Mammary epithelial cell (primary cell): ENCODE measurements at regions of chr15 and their contacts with region 1.

Region 1: GRCh38 chr15:99076552-99077308 is 28.1 kb upstream of the SYNM start:
- DNase-seq: peak; percentile 72
- H3K4me3 ChIP-seq: peak overlapping the region in 2 of 3 experiments; percentile 19 to 22
- H3K27ac ChIP-seq: no peak overlapping the region
- H3K4me1 ChIP-seq: no peaks in the 10 kb centered on the region
- H3K27me3 ChIP-seq: no peaks in the 10 kb centered on the region
- CTCF ChIP-seq: peak; percentile 90 to 95

Region 2: DNA sequence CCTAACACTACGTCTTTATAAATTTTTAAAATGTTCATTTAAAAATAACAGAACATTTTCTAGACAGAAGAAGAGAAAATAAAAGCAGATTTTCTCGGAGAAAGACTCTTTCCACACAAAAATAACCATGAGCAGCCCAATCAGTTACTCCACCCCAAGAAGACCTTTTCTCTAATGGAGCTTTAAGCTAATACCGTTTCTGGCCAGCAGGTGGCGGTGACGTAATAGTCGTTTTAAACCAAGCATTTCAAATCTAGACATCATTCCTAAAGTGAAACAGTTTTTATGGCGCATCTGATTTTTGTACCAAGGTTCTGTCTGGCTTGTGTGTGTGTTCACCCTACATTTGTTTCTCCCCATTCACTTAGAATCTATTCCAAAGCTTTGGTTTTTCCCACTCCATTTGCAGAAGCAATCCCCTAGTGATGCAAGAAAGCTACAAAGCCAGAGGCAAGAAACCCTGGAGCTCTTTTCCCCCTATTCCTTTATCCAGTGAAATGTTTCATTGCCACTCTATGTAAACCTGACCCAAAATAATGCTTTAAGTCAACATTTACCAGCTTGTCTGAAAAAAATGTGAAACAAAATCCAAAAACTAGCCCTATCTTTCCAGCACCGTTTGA is 765.1 kb before region 1 on chr15:
- CTCF ChIA-PET with region 1: no interaction called
- dilution Hi-C with region 1: no loop called
- in situ Hi-C with region 1: no loop called
- intact Hi-C with region 1: loop called (anchors 10 kb)
- DNase-seq: peak; percentile 62
- H3K4me3 ChIP-seq: no peak overlapping the region
- H3K27ac ChIP-seq: no peak overlapping the region
- H3K4me1 ChIP-seq: no peaks in the 10 kb centered on the region
- H3K27me3 ChIP-seq: no peaks in the 10 kb centered on the region
- CTCF ChIP-seq: peak; percentile 77 to 84

Region 3: GRCh38 chr15:98442379-98442833 is 634.3 kb before region 1 on chr15:
- CTCF ChIA-PET with region 1: no interaction called
- dilution Hi-C with region 1: no loop called
- in situ Hi-C with region 1: loop called (anchors 10 kb)
- intact Hi-C with region 1: loop called (anchors 1 kb)
- DNase-seq: peak; percentile 86
- H3K4me3 ChIP-seq: no peak overlapping the region
- H3K27ac ChIP-seq: no peak overlapping the region
- H3K4me1 ChIP-seq: peaks cover 6% of the 10 kb centered on the region
- H3K27me3 ChIP-seq: no peaks in the 10 kb centered on the region
- CTCF ChIP-seq: peak; percentile 89 to 97

Region 4: GRCh38 chr15:98658831-98659699 is 417.7 kb before region 1 on chr15:
- CTCF ChIA-PET with region 1: interaction called, 5 read pairs
- dilution Hi-C with region 1: no loop called
- in situ Hi-C with region 1: loop called in 1 of 2 experiments (anchors 10 kb)
- intact Hi-C with region 1: loop called (anchors 2 kb)
- DNase-seq: peak; percentile 60
- H3K4me3 ChIP-seq: no peak overlapping the region
- H3K27ac ChIP-seq: no peak overlapping the region
- H3K4me1 ChIP-seq: peaks cover 49% of the 10 kb centered on the region
- H3K27me3 ChIP-seq: no peaks in the 10 kb centered on the region
- CTCF ChIP-seq: peak; percentile 91

Region 5: GRCh38 chr15:98853161-98853560 is 223.6 kb before region 1 on chr15:
- CTCF ChIA-PET with region 1: interaction called, 4 read pairs
- dilution Hi-C with region 1: no loop called
- in situ Hi-C with region 1: no loop called
- intact Hi-C with region 1: loop called (anchors 1 kb)
- DNase-seq: peak; percentile 90
- H3K4me3 ChIP-seq: peak overlapping the region; percentile 65 to 72 (median 70)
- H3K27ac ChIP-seq: peak overlapping the region; percentile 75
- H3K4me1 ChIP-seq: peaks cover 58% of the 10 kb centered on the region
- H3K27me3 ChIP-seq: no peaks in the 10 kb centered on the region
- CTCF ChIP-seq: no peak

Region 6: GRCh38 chr15:98955366-98955765 is 121.4 kb before region 1 on chr15:
- CTCF ChIA-PET with region 1: no interaction called
- dilution Hi-C with region 1: no loop called
- in situ Hi-C with region 1: no loop called
- intact Hi-C with region 1: loop called (anchors 5 kb)
- DNase-seq: no peak
- H3K4me3 ChIP-seq: no peak overlapping the region
- H3K27ac ChIP-seq: no peak overlapping the region
- H3K4me1 ChIP-seq: no peaks in the 10 kb centered on the region
- H3K27me3 ChIP-seq: no peaks in the 10 kb centered on the region
- CTCF ChIP-seq: no peak